ENCODE measurements at regions of chr9 and their contacts with region 1.

Region 1: DNA sequence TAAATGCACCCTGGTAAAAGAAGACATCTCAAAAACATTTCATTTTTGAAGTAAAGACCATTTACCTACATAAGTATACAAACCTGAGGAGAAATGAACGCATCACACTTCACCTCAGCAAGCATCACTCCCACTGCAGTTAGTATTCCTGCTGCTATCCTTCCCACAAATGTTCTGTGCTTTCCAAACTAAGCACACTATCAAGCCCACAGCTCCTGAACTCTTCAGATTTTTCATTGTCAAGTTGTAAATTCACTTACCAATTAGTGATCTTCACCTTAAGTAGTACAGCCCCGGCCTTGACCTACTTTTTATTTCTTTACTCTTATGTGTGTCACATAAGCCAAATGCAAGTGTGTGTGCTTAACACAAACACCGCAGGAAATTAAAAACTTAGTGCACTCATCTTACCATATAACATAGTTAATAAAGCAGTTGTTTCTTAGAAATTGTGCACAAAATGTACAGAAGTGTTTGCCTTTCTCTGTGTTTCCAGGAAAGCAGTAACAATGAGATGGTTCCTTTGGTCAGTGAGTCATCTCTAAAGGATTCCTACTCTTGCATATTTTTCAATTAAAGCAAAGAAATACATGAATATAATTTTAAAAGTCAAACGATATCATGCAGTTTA is 169.4 kb downstream of the APBA1 start:
- DNase-seq: no peak
- H3K4me3 ChIP-seq: no peak overlapping the region
- H3K4me1 ChIP-seq: no peaks in the 10 kb centered on the region; the same call in 1 of the 2 replicates
- H3K27me3 ChIP-seq: no peaks in the 10 kb centered on the region

Region 2: GRCh38 chr9:69385581-69386033 is 117.2 kb before region 1 on chr9:
- in situ Hi-C with region 1: no loop called
- DNase-seq: no peak
- H3K4me3 ChIP-seq: no peak overlapping the region
- H3K4me1 ChIP-seq: no peaks in the 10 kb centered on the region
- H3K27me3 ChIP-seq: peaks cover 2% of the 10 kb centered on the region; the same call in 1 of the 2 replicates

Region 3: DNA sequence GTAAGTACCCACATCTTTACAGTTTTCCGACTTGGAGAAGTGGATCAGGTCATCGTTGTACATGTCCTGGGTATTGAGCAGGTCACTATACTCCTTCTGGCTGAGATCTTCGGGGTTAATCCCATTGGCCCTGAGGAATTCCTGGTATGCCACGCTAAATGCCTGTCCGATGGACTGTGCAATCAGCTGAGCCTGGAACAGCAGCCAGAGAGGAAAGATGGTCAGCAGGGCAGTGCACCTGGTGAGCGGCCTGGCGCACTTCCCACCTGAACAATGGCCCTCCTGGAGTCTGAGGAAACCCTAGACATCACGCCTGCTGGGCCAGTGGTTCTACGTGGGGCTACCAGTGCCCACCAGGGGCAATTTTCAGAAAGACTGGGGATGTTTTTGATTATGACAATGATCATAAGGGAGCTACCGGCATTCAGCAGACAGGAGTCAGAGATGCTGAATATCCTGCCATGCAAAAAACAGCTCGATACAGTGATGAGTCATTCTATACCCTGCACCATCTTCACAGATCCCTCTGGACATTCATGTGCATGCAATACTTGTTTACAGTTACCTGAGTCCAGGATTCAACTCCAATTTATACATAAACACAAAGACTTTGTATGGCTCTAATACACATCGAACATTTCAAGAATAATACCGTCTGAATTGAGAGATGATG is 50.5 kb before region 1 on chr9:
- in situ Hi-C with region 1: loop called (anchors 5 kb)
- DNase-seq: no peak
- H3K4me3 ChIP-seq: no peak overlapping the region
- H3K4me1 ChIP-seq: no peaks in the 10 kb centered on the region
- H3K27me3 ChIP-seq: no peaks in the 10 kb centered on the region

Region 4: DNA sequence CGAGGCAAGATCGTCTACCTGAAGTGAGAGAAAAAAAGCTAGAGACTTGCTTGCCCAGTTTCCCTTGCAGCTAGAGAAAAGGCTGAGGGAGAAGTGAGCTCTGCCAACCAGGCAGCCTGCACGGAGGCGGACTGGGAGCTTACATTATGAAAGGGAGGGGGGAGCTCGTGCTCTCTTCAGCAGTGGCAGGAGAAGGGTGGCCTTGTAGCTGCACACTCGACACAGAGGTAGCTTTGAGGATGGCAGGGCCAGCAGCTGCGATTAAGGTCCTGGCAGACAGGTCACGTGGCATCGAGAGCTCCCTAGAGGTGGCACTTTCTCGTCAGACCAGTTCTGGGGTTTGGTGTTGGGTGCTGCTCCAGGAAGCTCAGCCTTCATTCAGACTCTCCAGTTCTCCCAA is 142.7 kb after region 1 on chr9:
- in situ Hi-C with region 1: no loop called
- DNase-seq: no peak
- H3K4me3 ChIP-seq: no peak overlapping the region
- H3K4me1 ChIP-seq: peaks cover 22% of the 10 kb centered on the region
- H3K27me3 ChIP-seq: no peaks in the 10 kb centered on the region